Heart right ventricle (tissue), 16 donors: ENCODE measurements at regions of chr17 and their contacts with region 1.

Region 1: GRCh38 chr17:35170968-35171771 is 23.0 kb downstream of the SLC35G3 start:
- DNase-seq: no peak
- ATAC-seq: peak in 3 of 8 donors; percentile 16 to 46 (median 32)
- H3K4me3 ChIP-seq: no peak overlapping the region
- H3K27ac ChIP-seq: no peak overlapping the region
- H3K4me1 ChIP-seq: peaks cover 0 to 15% (median 0%) of the 10 kb centered on the region in 9 donors
- H3K27me3 ChIP-seq: no peaks in the 10 kb centered on the region
- CTCF ChIP-seq: peak in 7 of 9 donors; percentile 32 to 56 (median 41)

Region 2: DNA sequence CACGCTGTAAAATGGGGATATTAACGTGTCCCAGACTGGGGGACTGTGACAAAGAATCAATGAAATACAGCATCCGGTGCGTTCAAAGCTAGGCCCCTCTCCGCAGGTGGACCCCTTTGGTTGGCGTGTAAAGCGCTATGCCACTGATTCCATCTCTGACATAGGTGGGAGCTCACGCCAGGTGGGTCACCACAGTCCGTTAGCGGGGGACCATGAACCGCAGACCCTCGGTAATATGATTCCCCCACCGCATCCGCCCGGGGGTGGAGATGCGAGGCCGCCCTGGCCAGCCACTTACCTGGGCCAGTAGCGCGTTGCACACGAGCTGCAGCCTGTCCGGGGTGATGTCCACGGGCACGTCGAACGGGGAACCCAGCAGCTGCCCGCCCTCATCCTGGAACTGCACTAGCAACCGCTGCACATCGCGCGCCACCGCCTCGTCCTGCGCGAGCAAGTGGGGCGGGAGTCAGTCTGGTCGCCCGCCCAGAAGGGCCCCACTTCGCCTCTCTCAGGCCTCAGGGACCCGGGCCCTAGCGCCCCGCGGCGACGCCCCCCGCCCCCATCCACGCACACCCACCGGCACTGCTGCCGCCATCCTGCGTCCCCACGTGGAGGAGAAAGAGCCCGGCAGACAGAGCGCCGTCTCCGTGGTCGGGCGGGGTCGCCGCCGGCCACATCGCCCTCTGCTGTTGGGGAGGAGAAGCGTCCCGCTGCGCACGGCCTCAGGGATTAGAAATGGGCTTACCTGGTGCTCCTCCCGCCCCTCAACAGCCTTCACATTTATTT is 29.3 kb before region 1 on chr17 and contains the start of gene NLE1:
- intact Hi-C with region 1: no loop called
- DNase-seq: peak; percentile 82 to 85
- ATAC-seq: peak; percentile 87 to 95 (median 89)
- H3K4me3 ChIP-seq: peak within 1 kb of the TSS; percentile 69 to 100 (median 85)
- H3K27ac ChIP-seq: peak within 1 kb of the TSS in 4 of 10 donors; percentile 15 to 52 (median 36)
- H3K4me1 ChIP-seq: peaks cover 1 to 29% (median 19%) of the 10 kb centered on the region in 9 donors
- H3K27me3 ChIP-seq: no peaks in the 10 kb centered on the region
- CTCF ChIP-seq: peak; percentile 88 to 98 (median 96)
- total RNA-seq, gene NLE1: 2.7 to 5.1 (median 4.2) TPM

Region 3: DNA sequence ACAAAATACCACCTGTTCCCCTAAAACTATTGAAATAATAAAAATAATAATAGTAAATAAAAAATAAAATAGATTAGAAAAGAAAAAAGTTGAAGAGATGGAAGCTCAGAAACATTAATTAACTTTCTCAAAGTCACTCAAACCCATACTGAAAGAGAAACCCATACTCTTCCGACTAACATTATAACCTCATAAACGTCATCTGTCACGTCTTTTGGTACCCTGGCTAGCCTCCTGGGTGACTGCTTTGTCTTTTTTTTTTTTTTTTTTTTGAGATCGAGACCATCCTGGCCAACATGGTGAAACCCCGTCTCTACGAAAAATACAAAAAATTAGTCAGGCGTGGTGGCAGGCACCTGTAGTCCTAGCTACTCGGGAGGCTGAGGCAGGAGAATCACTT is 358.7 kb after region 1 on chr17:
- intact Hi-C with region 1: loop called in 6 of 10 experiments (anchors 5 to 10 kb)
- DNase-seq: no peak
- ATAC-seq: no peak
- H3K4me3 ChIP-seq: no peak overlapping the region
- H3K27ac ChIP-seq: no peak overlapping the region
- H3K4me1 ChIP-seq: peaks cover 0 to 6% (median 0%) of the 10 kb centered on the region in 9 donors
- H3K27me3 ChIP-seq: no peaks in the 10 kb centered on the region
- CTCF ChIP-seq: no peak

Region 4: DNA sequence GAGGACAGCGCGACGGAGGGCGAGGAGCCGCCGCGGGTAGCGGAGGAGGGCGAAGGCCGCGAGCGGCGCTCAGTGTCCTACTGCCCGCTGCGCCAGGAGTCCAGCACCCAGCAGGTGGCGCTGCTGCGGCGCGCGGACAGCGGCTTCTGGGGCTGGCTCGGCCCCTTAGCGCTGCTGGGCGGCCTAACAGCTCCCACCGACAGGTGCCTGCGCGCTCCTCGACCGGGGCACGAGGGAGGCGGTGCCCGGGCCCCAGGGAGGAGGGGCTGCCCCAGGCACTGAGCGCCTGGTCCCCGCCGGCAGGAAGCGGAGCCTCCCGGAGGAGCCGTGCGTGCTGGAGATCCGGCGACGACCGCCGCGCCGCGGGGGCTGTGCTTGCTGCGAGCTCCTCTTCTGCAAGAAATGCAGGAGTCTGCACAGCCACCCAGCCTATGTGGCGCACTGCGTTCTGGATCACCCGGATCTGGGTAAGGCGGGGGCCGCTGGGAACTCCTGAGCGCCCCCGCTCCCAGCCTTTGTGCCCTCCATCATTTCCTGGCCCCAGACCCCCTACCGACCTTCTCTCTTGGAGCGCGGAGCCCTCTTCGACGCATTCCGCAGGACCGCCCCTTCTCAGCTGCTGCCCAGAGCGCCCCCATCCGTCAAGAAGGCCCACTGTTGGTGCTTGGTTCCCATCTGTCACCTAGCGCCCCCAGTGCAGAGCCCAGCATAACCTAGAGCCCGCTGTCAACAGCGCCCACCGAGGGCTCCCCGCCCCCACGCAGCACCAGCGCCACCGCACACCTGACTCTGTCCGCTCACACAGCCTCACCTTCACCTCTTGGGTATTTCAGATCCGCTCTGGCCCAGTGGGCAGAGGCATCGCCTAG is 593.2 kb after region 1 on chr17:
- intact Hi-C with region 1: loop called in 1 of 10 experiments (anchors 10 kb)
- DNase-seq: peak; percentile 81 to 91
- ATAC-seq: peak; percentile 93 to 98 (median 96)
- H3K4me3 ChIP-seq: peak overlapping the region in 9 of 10 donors; percentile 34 to 62 (median 60)
- H3K27ac ChIP-seq: peak overlapping the region in 2 of 10 donors; percentile 41 to 44
- H3K4me1 ChIP-seq: peaks cover 2 to 28% (median 8%) of the 10 kb centered on the region in 9 donors
- H3K27me3 ChIP-seq: peaks cover 0 to 10% (median 0%) of the 10 kb centered on the region in 7 donors
- CTCF ChIP-seq: peak; percentile 89 to 97 (median 96)